Right cardiac atrium (tissue), 5 donors: ENCODE measurements at regions of chr18 and their contacts with region 1.

Region 1: GRCh38 chr18:45690975-45691815 is 32.8 kb upstream of the SLC14A1 start:
- DNase-seq: peak; percentile 77 to 87 (median 86)
- ATAC-seq: peak; percentile 87 to 89
- H3K4me3 ChIP-seq: no peak overlapping the region
- H3K27ac ChIP-seq: no peak overlapping the region
- H3K4me1 ChIP-seq: no peaks in the 10 kb centered on the region
- H3K27me3 ChIP-seq: no peaks in the 10 kb centered on the region

Region 2: GRCh38 chr18:45850021-45850420 is 158.8 kb after region 1 on chr18:
- intact Hi-C with region 1: loop called in 1 of 4 experiments (anchors 10 kb)
- DNase-seq: peak in 1 of 3 donors; percentile 21
- ATAC-seq: no peak
- H3K4me3 ChIP-seq: no peak overlapping the region
- H3K27ac ChIP-seq: no peak overlapping the region
- H3K4me1 ChIP-seq: no peaks in the 10 kb centered on the region
- H3K27me3 ChIP-seq: no peaks in the 10 kb centered on the region

Region 3: GRCh38 chr18:45879681-45880655 is 188.8 kb after region 1 on chr18:
- intact Hi-C with region 1: loop called (anchors 2 to 10 kb)
- DNase-seq: peak; percentile 68 to 91 (median 87)
- ATAC-seq: peak; percentile 84 to 98
- H3K4me3 ChIP-seq: no peak overlapping the region
- H3K27ac ChIP-seq: no peak overlapping the region
- H3K4me1 ChIP-seq: no peaks in the 10 kb centered on the region
- H3K27me3 ChIP-seq: no peaks in the 10 kb centered on the region

Region 4: GRCh38 chr18:45974088-45974536 is 282.9 kb after region 1 on chr18:
- intact Hi-C with region 1: loop called in 1 of 4 experiments (anchors 10 kb)
- DNase-seq: peak in 2 of 3 donors; percentile 30 to 66
- ATAC-seq: peak; percentile 81 to 83
- H3K4me3 ChIP-seq: no peak overlapping the region
- H3K27ac ChIP-seq: no peak overlapping the region
- H3K4me1 ChIP-seq: no peaks in the 10 kb centered on the region
- H3K27me3 ChIP-seq: no peaks in the 10 kb centered on the region